ENCODE measurements at regions of chr9 and their contacts with region 1.

Region 1: DNA sequence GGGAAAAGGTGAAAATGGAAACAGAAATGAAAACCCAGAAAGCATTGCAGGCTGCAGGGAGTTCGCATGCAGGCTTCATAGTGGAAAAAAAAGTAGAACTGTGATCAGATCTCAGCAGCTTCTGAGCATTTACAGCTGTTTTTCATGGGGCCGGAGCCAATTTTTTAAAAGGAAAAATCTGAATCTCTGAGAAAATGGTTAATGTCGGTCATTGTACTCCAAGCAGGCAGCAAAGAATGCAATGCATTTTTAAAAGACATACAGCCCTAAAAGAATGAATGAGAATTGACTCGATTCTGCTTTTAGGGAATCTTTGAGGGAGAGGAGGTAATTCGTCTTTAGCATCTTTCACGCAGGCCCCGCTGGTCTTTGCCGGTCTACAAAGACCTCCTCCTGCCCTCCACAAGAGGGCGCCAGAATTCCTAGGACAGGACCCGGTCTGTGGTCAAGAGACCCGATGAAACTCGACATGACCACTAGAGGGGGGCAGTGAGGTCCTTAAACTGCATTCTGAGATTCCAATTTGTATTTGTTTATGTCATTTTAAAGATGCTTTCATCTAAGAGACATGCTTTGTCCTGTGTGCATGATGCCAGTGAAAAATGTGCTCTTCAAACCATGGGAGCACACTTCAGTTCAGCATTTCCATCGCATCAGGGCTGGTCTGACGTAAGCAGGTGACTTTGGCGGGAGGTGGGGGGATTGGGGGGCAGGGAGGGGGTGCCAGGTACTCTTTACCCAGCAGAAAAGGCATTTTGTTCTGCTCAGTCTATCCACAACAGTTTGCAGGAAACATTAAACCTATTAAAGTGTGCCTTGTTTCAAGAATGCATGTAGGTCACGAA is 43.7 kb upstream of the TMEM252 start:
- DNase-seq: peak; percentile 59 to 61
- H3K4me3 ChIP-seq: no peak overlapping the region
- H3K4me3 Mint-ChIP-seq: no peak overlapping the region
- H3K27ac Mint-ChIP-seq: no peak overlapping the region
- H3K4me1 ChIP-seq: no peaks in the 10 kb centered on the region
- H3K4me1 Mint-ChIP-seq: no peaks in the 10 kb centered on the region
- H3K27me3 ChIP-seq: no peaks in the 10 kb centered on the region
- H3K27me3 Mint-ChIP-seq: peaks cover 2% of the 10 kb centered on the region
- CTCF ChIP-seq: peak; percentile 46 to 75

Region 2: DNA sequence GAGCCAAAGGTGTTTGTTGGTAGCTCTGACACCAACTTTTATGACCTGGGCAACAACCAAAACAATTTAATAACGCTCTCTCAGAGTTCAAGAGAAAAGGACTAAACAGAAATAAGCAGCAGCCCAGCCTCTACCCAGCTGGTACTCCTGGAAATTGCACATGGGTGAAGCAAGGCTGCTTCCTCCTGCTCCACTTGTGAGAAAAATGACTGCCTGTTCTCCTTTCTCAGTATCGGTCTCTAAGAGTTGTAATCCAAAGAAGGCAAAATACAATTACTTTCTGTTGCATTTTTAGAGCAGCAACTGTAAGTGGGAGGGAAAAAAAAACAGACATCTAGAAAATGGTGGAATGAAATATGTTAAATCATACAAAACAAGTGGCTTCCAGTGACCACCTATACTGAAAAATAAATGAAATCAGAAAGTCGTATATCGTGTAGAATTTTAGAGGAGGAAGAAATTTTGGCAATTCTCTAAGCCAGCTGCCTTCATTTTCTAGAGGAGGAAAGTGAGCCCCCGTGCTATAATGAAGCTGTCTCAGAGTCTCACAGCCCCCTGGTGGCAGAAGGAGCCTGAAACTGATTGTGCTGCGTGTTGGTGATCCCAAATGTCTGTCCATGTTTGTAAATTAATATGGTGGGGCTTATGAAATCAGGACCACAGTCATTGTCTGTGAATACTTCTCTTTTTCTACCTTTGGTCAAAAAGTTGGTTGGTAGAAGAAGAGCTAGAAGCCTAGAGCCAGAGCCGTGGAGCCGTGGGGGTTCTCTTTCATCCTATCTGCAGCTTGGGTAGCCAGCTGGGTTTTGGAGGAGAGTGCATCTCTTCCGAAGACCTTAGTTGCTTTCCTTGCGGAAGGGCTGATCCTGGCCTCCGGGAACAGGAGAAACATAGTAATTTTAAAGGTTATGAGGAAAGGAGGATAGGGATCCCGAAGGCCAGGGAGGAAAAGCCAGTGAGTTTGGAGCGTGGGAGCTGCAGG is 260.5 kb after region 1 on chr9:
- CTCF ChIA-PET with region 1: no interaction called
- POLR2A ChIA-PET with region 1: no interaction called
- intact Hi-C with region 1: loop called (anchors 10 kb)
- DNase-seq: peak; percentile 3 to 25
- H3K4me3 ChIP-seq: no peak overlapping the region
- H3K4me3 Mint-ChIP-seq: no peak overlapping the region
- H3K27ac Mint-ChIP-seq: peak overlapping the region; percentile 29
- H3K4me1 ChIP-seq: no peaks in the 10 kb centered on the region
- H3K4me1 Mint-ChIP-seq: no peaks in the 10 kb centered on the region
- H3K27me3 ChIP-seq: no peaks in the 10 kb centered on the region
- H3K27me3 Mint-ChIP-seq: no peaks in the 10 kb centered on the region
- CTCF ChIP-seq: peak in 1 of 2 experiments; percentile 24

Region 3: DNA sequence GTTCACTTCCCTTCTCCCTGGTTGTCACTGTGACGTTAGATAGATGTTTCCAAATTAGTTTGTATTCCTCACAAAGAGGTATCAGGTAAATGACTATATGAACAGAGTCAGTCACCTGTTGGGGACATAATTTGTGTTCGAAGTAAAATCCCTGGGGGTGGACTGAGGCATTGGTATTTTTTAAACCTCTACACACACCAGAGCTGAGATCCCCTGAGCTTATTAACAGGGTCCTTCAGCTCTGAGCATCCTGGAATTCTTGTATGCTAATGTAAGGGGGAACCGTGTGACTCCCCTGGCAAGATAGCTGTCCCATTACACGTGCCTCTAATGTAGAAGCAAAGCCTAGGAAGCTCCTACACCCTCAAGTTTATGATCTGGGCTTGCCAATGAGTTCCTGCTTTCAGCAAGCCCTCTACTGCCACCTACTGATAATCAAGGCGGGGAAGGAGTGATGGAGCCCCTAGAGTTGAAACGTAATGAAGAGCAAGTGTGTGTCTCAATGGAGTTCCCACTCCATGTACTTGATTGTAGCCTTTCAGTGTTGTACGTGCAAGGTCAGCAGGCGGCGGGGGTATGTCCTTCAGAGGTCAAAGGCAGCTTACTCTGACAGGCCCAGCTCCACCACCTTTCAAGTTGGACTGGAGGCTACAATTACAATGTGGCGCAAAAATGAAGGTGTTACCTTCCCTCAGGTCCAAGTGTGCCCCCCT is 415.1 kb after region 1 on chr9:
- CTCF ChIA-PET with region 1: no interaction called
- POLR2A ChIA-PET with region 1: no interaction called
- intact Hi-C with region 1: loop called (anchors 2 kb)
- DNase-seq: peak; percentile 23 to 48
- H3K4me3 ChIP-seq: no peak overlapping the region
- H3K4me3 Mint-ChIP-seq: no peak overlapping the region
- H3K27ac Mint-ChIP-seq: no peak overlapping the region
- H3K4me1 ChIP-seq: no peaks in the 10 kb centered on the region
- H3K4me1 Mint-ChIP-seq: no peaks in the 10 kb centered on the region
- H3K27me3 ChIP-seq: no peaks in the 10 kb centered on the region
- H3K27me3 Mint-ChIP-seq: no peaks in the 10 kb centered on the region
- CTCF ChIP-seq: peak; percentile 4 to 36

Region 4: GRCh38 chr9:69027355-69028096 is 443.1 kb after region 1 on chr9:
- CTCF ChIA-PET with region 1: no interaction called
- POLR2A ChIA-PET with region 1: no interaction called
- intact Hi-C with region 1: loop called (anchors 5 kb)
- DNase-seq: peak in 1 of 2 experiments; percentile 14
- H3K4me3 ChIP-seq: no peak overlapping the region
- H3K4me3 Mint-ChIP-seq: no peak overlapping the region
- H3K27ac Mint-ChIP-seq: no peak overlapping the region
- H3K4me1 ChIP-seq: no peaks in the 10 kb centered on the region
- H3K4me1 Mint-ChIP-seq: peaks cover 5% of the 10 kb centered on the region
- H3K27me3 ChIP-seq: no peaks in the 10 kb centered on the region
- H3K27me3 Mint-ChIP-seq: no peaks in the 10 kb centered on the region
- CTCF ChIP-seq: peak in 1 of 2 experiments; percentile 25